AG04449 (cell line): ENCODE measurements at regions of chr10 and their contacts with region 1.

Region 1: DNA sequence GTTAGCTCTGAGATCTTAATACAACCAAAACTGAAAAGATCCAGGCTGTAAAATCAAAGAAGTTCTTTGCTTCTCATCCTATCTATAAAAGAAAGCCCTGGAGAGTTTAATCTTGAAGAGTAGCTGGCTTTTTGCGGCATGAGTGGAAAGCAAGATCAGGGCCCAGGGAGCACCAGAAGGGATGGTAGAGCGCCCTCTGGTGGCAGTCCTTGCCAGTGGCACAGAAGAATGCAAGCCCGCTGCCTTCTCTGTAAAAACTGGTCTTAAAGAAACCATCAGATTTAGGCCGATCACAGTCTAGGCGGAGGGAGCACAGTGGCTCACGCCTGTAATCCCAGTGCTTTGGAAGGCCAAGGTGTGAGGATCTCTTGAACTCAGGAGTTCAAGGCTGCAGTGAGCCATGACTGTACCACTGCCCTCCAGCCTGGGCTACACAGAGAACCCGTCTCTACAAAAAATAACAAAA is 35.6 kb downstream of the CPN1 start:
- DNase-seq: peak; percentile 42
- H3K4me3 ChIP-seq: no peak overlapping the region
- CTCF ChIP-seq: peak; percentile 89

Region 2: DNA sequence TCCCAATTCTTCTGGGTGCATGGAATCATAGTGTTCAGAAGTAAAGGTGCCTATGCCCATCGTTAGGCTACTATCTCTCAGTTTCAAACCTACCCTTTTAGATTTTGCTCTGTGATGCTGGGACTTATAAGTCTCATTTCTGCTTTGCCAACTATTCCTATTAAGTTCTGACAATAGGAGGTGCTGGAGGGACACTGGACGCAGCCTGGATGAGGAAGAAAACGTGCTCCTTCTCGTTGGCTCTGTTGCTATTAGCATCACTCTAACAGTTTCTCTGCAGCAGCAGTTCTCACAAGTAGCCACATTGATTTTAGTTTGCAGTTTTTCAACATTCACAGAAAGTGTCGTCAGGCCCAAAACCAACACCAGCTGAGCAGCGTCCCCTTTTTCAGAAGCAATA is 191.2 kb before region 1 on chr10:
- CTCF ChIA-PET with region 1: interaction called, 470 read pairs
- POLR2A ChIA-PET with region 1: no interaction called
- DNase-seq: peak; percentile 36
- H3K4me3 ChIP-seq: no peak overlapping the region
- CTCF ChIP-seq: peak; percentile 69

Region 3: DNA sequence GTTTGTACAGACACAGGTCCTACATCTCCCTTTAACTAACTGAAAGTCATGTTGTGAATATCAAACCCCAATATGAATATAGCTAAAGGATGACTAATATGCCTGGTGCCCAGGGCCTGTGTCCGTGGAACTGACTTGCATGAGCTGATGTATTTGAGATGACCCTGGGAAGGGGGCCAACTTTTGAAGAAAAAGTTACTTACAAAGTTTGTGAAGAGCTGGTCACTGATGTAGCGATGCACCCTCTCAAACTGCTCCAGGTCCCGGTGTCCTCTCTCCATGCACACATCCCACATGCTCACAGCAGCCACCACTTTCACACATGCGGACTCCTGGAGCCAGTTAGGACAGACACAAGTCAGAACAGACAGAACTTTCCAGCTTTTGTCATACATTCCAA is 157.4 kb before region 1 on chr10:
- CTCF ChIA-PET with region 1: interaction called, 12 read pairs
- POLR2A ChIA-PET with region 1: no interaction called
- DNase-seq: no peak
- H3K4me3 ChIP-seq: no peak overlapping the region
- CTCF ChIP-seq: no peak

Region 4: GRCh38 chr10:99906470-99906869 is 139.6 kb before region 1 on chr10:
- CTCF ChIA-PET with region 1: interaction called, 27 read pairs
- POLR2A ChIA-PET with region 1: no interaction called
- DNase-seq: no peak
- H3K4me3 ChIP-seq: no peak overlapping the region
- CTCF ChIP-seq: no peak

Region 5: DNA sequence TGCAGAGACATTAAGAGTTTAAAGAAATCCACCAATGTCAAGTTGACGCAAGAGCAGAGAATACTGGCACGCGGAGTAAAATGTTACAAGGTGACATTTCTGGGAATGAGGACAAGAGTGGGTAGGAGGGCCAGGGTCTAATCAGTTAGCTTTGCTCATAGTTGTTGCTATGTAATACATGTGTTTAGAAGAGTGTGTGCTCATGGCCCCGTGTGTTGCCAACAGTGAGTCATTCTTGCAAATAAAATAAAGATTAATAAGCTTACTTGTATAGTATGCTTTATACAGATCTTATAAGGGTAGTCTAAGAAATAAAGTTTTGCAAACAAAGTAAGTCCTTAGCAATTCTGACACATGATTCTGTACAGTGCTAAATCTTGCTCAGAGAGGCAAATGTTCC is 100.8 kb before region 1 on chr10:
- CTCF ChIA-PET with region 1: interaction called, 11 read pairs
- POLR2A ChIA-PET with region 1: no interaction called
- DNase-seq: peak; percentile 54
- H3K4me3 ChIP-seq: no peak overlapping the region
- CTCF ChIP-seq: no peak

Region 6: GRCh38 chr10:99976886-99977665 is 69.0 kb before region 1 on chr10:
- CTCF ChIA-PET with region 1: interaction called, 39 read pairs
- POLR2A ChIA-PET with region 1: no interaction called
- DNase-seq: peak; percentile 92
- H3K4me3 ChIP-seq: peak overlapping the region; percentile 25
- CTCF ChIP-seq: no peak

Region 7: DNA sequence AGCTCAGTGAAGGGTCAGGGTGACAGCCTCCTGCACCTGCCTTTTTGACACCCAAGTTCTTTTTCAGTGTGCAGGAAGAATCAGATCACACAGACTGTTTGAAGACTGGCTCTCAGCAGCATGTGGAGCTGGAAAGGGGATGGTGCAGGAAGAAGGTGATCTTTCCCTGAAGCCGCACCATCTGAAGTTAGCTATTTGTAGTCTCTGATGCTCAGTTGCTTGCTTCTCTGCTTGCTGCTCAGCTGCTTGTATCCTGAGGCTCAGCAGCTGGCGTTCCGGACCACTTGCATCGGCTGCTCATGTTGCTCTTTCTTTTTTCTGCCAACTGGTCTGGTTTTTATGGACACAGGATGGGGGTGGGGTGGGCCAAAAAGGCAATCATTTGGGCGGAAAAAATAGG is 20.5 kb before region 1 on chr10:
- CTCF ChIA-PET with region 1: interaction called, 25 read pairs
- POLR2A ChIA-PET with region 1: no interaction called
- DNase-seq: no peak
- H3K4me3 ChIP-seq: no peak overlapping the region
- CTCF ChIP-seq: no peak